ENCODE measurements at regions of chr20 and their contacts with region 1.

Region 1: DNA sequence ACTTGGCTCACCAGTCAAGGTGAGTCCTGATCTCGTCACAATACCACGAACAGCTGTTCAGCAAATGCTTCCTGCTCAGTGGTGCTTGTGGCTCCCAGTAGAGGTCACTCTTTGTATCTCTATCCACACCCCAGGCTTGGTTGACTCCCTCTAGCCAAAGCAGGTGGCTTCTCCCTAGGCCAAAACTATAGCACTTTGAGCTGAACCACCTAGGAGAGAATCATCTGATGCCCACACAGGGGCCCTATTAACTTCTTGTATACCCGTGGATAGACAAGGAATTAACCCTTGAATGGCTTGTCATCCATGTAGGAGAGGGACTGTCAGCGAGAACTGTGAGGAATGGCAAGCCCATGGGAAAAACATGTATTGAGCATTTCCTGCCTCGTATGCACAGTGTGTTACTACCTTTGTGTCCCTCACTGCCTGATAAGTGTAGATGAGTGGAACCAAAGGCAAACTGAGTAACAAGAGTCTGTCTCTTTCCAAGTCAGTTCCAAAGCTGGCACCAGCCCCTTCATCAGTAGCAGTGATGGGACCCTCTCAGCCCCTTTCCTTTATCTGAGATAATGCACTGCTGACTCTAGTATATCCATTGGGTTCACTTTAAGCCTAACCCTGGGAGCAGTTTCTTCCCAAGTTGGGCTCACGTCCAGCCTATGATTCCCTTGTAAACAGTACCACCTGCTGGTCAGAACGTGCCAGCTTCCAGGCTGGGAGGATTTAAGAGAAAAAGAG is 42.5 kb downstream of the EIF2S2 start:
- DNase-seq: no peak
- H3K4me3 ChIP-seq: no peak overlapping the region
- H3K27ac ChIP-seq: peak overlapping the region in 3 of 8 donors; percentile 5 to 19 (median 8)
- H3K4me1 ChIP-seq: peaks cover 6 to 38% (median 16%) of the 10 kb centered on the region in 6 donors
- H3K27me3 ChIP-seq: no peaks in the 10 kb centered on the region
- CTCF ChIP-seq: peak; percentile 67 to 88 (median 82)
- POLR2A ChIP-seq: no peak

Region 2: DNA sequence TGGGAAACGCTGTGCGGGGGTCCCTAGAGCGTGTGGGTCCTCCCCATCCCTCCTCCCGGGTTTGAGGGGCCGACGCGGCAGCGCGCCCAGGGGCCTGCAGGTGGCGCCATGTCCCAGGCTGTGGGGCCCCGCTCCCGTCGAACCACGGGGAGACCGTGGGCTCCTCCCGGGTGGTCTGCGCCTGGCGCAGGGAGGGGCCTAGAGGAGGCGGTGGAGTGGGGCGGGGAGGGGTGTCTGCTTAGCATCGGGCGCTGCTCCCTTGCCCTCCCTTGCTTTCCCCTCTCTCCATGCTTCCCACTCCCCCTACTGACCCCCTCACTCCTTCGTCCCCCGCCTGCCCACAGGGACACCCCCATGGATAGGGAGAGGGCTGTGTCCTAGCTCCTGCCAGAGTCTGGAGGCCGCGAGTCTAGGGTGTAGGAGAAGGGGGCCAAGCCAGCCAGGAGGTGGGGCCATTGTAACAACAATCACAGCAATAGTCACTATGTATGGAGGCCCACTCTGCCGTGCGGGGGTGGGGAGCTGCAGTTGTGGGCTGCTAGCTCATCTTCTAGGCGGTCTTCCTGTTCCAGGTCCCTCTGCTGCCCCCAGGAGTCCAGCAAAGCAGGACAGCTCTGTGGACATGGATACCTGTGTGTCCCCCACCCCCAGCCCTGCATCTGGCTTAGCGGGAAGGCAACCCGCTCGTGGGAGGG is 206.7 kb before region 1 on chr20:
- intact Hi-C with region 1: loop called (anchors 5 kb)
- DNase-seq: peak; percentile 82
- H3K4me3 ChIP-seq: no peak overlapping the region
- H3K27ac ChIP-seq: peak overlapping the region in 1 of 8 donors; percentile 5
- H3K4me1 ChIP-seq: peaks cover 11 to 36% (median 26%) of the 10 kb centered on the region in 6 donors
- H3K27me3 ChIP-seq: no peaks in the 10 kb centered on the region
- CTCF ChIP-seq: peak in 10 of 11 experiments; percentile 37 to 82 (median 76)
- POLR2A ChIP-seq: no peak

Region 3: GRCh38 chr20:33915726-33916331 is 153.7 kb before region 1 on chr20:
- intact Hi-C with region 1: loop called (anchors 10 kb)
- DNase-seq: peak; percentile 83
- H3K4me3 ChIP-seq: no peak overlapping the region
- H3K27ac ChIP-seq: no peak overlapping the region
- H3K4me1 ChIP-seq: peaks cover 0 to 8% (median 0%) of the 10 kb centered on the region in 6 donors
- H3K27me3 ChIP-seq: no peaks in the 10 kb centered on the region
- CTCF ChIP-seq: peak in 10 of 11 experiments; percentile 30 to 76 (median 64)
- POLR2A ChIP-seq: no peak

Region 4: GRCh38 chr20:33984182-33984719 is 85.3 kb before region 1 on chr20:
- intact Hi-C with region 1: loop called (anchors 10 kb)
- DNase-seq: no peak
- H3K4me3 ChIP-seq: no peak overlapping the region
- H3K27ac ChIP-seq: no peak overlapping the region
- H3K4me1 ChIP-seq: no peaks in the 10 kb centered on the region
- H3K27me3 ChIP-seq: no peaks in the 10 kb centered on the region
- CTCF ChIP-seq: no peak
- POLR2A ChIP-seq: no peak

Region 5: DNA sequence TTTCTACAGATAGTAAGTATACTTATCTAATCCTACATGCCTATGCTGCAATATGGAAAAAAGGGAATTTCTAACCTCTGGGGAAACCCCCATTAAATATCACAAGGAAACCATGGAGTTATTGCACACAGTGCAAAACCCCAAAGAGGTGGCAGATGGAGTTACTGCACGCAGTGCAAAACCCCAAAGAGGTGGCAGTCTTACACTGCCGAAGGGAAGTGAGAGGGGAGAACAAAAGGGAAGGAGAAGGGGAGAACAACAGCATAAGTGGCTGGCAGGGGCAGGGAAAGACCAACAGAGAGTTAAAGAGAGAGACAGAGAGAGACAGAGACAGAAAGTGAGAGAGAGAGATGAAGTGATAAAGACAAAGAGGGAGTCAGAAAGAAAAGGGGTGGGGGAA is 86.3 kb after region 1 on chr20:
- intact Hi-C with region 1: no loop called
- DNase-seq: no peak
- H3K4me3 ChIP-seq: no peak overlapping the region
- H3K27ac ChIP-seq: no peak overlapping the region
- H3K4me1 ChIP-seq: peaks cover 0 to 8% (median 0%) of the 10 kb centered on the region in 6 donors
- H3K27me3 ChIP-seq: no peaks in the 10 kb centered on the region
- CTCF ChIP-seq: no peak
- POLR2A ChIP-seq: no peak